ENCODE measurements at regions of chr12 and their contacts with region 1.

Region 1: GRCh38 chr12:107393043-107393717 is 292.4 kb upstream of the PWP1 start:
- DNase-seq: no peak
- H3K4me3 ChIP-seq: no peak overlapping the region
- H3K27ac ChIP-seq: no peak overlapping the region
- H3K4me1 ChIP-seq: peaks cover 0 to 9% of the 10 kb centered on the region in 2 experiments; a peak in 1 of 4 replicates
- H3K27me3 ChIP-seq: no peaks in the 10 kb centered on the region
- CTCF ChIP-seq: no peak
- EP300 ChIP-seq: no peak
- RAD21 ChIP-seq: no peak

Region 2: GRCh38 chr12:107317751-107318613 is 75.2 kb before region 1 on chr12:
- CTCF ChIA-PET with region 1: interaction called, 13 read pairs
- POLR2A ChIA-PET with region 1: interaction called, 4 read pairs
- DNase-seq: peak; percentile 96
- H3K4me3 ChIP-seq: peak overlapping the region; percentile 46 to 69
- H3K27ac ChIP-seq: no peak overlapping the region
- H3K4me1 ChIP-seq: peaks cover 0 to 24% of the 10 kb centered on the region in 2 experiments; a peak in 1 of 4 replicates
- H3K27me3 ChIP-seq: peaks cover 17% of the 10 kb centered on the region; the same call in 1 of the 2 replicates
- CTCF ChIP-seq: no peak; the same call in 1 of the 2 replicates
- EP300 ChIP-seq: no peak
- RAD21 ChIP-seq: peak; percentile 43

Region 3: GRCh38 chr12:108337235-108338223 is 944.3 kb after region 1 on chr12:
- CTCF ChIA-PET with region 1: no interaction called
- POLR2A ChIA-PET with region 1: no interaction called
- DNase-seq: peak; percentile 72
- H3K4me3 ChIP-seq: peak overlapping the region in 1 of 2 experiments; percentile 43; a peak in 1 of 4 replicates
- H3K27ac ChIP-seq: peak overlapping the region in 1 of 2 experiments; percentile 87; a peak in 2 of 4 replicates
- H3K4me1 ChIP-seq: peaks cover 0 to 39% of the 10 kb centered on the region in 2 experiments; a peak in 2 of 4 replicates
- H3K27me3 ChIP-seq: no peaks in the 10 kb centered on the region
- CTCF ChIP-seq: peak; percentile 24; the same call in 1 of the 2 replicates
- EP300 ChIP-seq: no peak
- RAD21 ChIP-seq: peak; percentile 61

Measured in SK-N-SH (cell line).